ENCODE measurements at regions of chr14 and their contacts with region 1.

Region 1: GRCh38 chr14:89445273-89445973 is 28.4 kb upstream of the FOXN3 start:
- DNase-seq: peak; percentile 18
- H3K4me3 Mint-ChIP-seq: no peak overlapping the region
- H3K27ac Mint-ChIP-seq: peak overlapping the region; percentile 82
- H3K4me1 Mint-ChIP-seq: peaks cover 55% of the 10 kb centered on the region
- H3K27me3 Mint-ChIP-seq: no peaks in the 10 kb centered on the region

Region 2: DNA sequence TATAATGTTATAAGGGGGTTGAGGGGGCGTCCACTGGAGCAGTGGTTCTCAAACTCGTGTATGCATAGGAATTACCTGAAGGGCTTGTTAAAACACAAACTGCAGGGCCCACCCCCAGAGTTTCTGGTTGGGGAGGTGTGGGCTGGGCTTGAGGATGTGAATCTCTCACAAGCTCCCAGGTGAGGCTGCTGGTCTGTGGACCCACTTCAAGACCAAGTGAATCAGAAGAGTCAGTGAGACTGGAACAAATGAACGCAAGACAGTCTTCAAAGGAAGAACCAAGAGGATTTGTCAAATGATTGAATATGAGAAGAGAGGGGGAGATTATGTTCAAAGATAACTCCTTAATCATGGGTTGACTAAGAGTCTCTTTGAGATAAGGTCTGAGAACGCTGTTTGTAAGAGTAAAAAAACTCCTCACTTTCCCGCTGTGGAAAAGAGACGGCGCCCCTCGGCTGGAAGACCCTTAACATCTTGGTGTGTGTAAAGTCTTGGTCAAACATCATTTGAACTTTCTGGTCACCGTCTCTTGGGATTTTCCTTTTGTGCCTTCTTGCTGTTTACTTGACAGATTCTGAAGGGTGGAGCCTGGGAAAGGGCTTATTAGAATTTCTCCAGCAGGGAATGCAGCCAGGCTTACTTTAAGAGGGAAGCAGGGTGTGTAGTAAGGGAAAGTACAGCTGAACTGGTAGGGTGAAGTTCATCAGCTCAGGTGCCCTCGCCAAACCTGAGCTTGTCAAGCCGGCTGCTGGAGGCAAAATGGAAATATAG is 23.1 kb before region 1 on chr14:
- intact Hi-C with region 1: loop called (anchors 2 kb)
- DNase-seq: no peak
- H3K4me3 Mint-ChIP-seq: peak overlapping the region; percentile 24
- H3K27ac Mint-ChIP-seq: peak overlapping the region; percentile 83
- H3K4me1 Mint-ChIP-seq: peaks cover 75% of the 10 kb centered on the region
- H3K27me3 Mint-ChIP-seq: no peaks in the 10 kb centered on the region

Region 3: DNA sequence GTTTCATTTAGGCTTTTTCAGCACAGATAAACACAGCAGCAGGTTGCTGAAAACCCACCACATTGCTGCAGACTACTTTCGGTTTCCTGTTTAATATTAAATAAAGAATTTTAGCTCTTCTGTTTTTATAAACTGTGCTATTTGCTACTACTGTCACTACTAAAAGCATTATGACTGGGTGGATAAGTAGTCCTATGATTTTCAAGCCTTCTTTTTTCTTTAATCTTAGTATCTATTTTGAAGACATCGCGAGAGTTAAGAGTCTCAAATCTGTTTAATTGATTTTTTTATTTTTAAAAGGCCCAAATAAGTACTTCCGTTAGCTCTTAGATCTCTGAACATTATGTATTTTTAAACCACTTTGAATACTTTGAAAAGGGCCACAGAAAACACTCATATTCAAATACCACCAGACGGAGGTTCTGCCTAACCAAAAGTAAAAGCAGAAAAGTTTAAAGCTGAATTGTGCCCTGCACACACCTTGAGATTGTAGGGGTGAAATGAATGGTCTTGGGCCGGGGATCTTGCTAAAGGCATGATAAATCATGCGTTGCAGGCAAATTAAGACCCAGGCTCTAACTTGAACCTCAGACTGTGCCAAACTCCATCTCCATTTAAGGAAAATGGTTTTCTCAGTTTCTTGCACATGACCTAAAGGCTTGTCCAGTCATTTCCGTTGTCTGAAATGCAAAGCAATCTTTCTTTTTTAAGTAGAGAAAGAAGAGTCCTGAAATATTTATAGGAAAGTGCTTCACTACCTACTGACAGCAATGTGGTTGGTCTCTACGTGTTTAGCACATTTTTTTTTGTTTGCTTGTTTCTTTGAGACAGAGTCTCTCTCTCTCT is 14.8 kb before region 1 on chr14:
- intact Hi-C with region 1: loop called (anchors 1 kb)
- DNase-seq: peak; percentile 52
- H3K4me3 Mint-ChIP-seq: peak overlapping the region; percentile 84
- H3K27ac Mint-ChIP-seq: peak overlapping the region; percentile 94
- H3K4me1 Mint-ChIP-seq: peaks cover 59% of the 10 kb centered on the region
- H3K27me3 Mint-ChIP-seq: no peaks in the 10 kb centered on the region

Region 4: DNA sequence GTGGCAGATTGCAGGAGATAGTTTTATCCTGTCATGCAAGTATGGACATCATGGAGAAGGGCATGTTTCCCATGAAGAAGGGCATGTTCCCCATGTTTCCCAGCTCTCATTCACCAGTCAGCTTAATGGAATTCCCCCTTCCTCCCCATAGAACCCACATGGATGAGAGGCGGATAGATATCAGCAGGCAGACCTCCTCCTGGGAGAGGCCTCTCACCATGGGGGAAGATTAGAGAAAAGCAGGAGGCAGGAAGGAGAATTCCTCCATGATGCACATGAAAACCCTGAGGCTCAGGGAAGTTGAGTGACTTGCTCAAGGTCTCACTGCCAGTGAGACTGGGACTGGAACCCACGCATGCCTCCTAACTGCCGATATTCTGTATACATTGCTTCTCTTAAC is 64.5 kb after region 1 on chr14:
- intact Hi-C with region 1: loop called (anchors 1 kb)
- DNase-seq: no peak
- H3K4me3 Mint-ChIP-seq: peak overlapping the region; percentile 74
- H3K27ac Mint-ChIP-seq: peak overlapping the region; percentile 96
- H3K4me1 Mint-ChIP-seq: peaks cover 58% of the 10 kb centered on the region
- H3K27me3 Mint-ChIP-seq: no peaks in the 10 kb centered on the region

Region 5: GRCh38 chr14:89589400-89590118 is 144.1 kb after region 1 on chr14:
- intact Hi-C with region 1: no loop called
- DNase-seq: no peak
- H3K4me3 Mint-ChIP-seq: no peak overlapping the region
- H3K27ac Mint-ChIP-seq: peak overlapping the region; percentile 36
- H3K4me1 Mint-ChIP-seq: peaks cover 59% of the 10 kb centered on the region
- H3K27me3 Mint-ChIP-seq: no peaks in the 10 kb centered on the region

Region 6: GRCh38 chr14:89613260-89614008 is 168.0 kb after region 1 on chr14:
- intact Hi-C with region 1: loop called (anchors 1 kb)
- DNase-seq: no peak
- H3K4me3 Mint-ChIP-seq: peak overlapping the region; percentile 59
- H3K27ac Mint-ChIP-seq: peak overlapping the region; percentile 86
- H3K4me1 Mint-ChIP-seq: peaks cover 69% of the 10 kb centered on the region
- H3K27me3 Mint-ChIP-seq: no peaks in the 10 kb centered on the region